ENCODE measurements at regions of chr6 and their contacts with region 1.

Region 1: GRCh38 chr6:112780498-112781096 is 433.5 kb downstream of the RFPL4B start:
- DNase-seq: peak; percentile 61 to 76
- H3K4me3 ChIP-seq: no peak overlapping the region
- H3K27ac ChIP-seq: no peak overlapping the region
- H3K4me1 ChIP-seq: no peaks in the 10 kb centered on the region
- H3K27me3 ChIP-seq: no peaks in the 10 kb centered on the region
- CTCF ChIP-seq: peak; percentile 85 to 87

Region 2: GRCh38 chr6:112179631-112180030 is 601.0 kb before region 1 on chr6:
- intact Hi-C with region 1: no loop called
- DNase-seq: no peak
- H3K4me3 ChIP-seq: no peak overlapping the region
- H3K27ac ChIP-seq: no peak overlapping the region
- H3K4me1 ChIP-seq: peaks cover 0 to 6% (median 0%) of the 10 kb centered on the region in 4 donors
- H3K27me3 ChIP-seq: no peaks in the 10 kb centered on the region
- CTCF ChIP-seq: no peak

Region 3: GRCh38 chr6:112841553-112842329 is 61.1 kb after region 1 on chr6:
- intact Hi-C with region 1: no loop called
- DNase-seq: no peak
- H3K4me3 ChIP-seq: no peak overlapping the region
- H3K27ac ChIP-seq: no peak overlapping the region
- H3K4me1 ChIP-seq: peaks cover 0 to 4% (median 0%) of the 10 kb centered on the region in 4 donors
- H3K27me3 ChIP-seq: no peaks in the 10 kb centered on the region
- CTCF ChIP-seq: no peak

Region 4: DNA sequence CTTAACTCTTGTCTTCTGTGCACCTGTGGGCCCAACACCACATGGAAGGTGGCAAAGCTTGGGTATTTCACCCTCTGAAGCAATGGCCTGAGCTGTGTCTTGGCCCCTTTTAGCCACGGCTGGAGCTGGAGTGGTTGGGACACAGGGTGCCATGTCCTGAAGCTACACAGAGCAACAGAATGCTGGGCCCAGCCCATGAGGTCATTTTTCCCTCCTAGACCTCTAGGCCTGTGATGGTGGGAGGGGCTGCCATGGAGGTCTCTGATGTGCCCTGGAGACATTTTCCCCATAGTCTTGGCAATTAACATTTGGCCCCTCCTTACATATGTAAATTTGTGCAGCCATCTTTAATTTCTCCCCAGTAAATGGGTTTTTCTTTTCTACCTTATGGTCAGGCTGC is 187.4 kb after region 1 on chr6:
- intact Hi-C with region 1: no loop called
- DNase-seq: no peak
- H3K4me3 ChIP-seq: no peak overlapping the region
- H3K27ac ChIP-seq: no peak overlapping the region
- H3K4me1 ChIP-seq: no peaks in the 10 kb centered on the region
- H3K27me3 ChIP-seq: no peaks in the 10 kb centered on the region
- CTCF ChIP-seq: no peak

Region 5: DNA sequence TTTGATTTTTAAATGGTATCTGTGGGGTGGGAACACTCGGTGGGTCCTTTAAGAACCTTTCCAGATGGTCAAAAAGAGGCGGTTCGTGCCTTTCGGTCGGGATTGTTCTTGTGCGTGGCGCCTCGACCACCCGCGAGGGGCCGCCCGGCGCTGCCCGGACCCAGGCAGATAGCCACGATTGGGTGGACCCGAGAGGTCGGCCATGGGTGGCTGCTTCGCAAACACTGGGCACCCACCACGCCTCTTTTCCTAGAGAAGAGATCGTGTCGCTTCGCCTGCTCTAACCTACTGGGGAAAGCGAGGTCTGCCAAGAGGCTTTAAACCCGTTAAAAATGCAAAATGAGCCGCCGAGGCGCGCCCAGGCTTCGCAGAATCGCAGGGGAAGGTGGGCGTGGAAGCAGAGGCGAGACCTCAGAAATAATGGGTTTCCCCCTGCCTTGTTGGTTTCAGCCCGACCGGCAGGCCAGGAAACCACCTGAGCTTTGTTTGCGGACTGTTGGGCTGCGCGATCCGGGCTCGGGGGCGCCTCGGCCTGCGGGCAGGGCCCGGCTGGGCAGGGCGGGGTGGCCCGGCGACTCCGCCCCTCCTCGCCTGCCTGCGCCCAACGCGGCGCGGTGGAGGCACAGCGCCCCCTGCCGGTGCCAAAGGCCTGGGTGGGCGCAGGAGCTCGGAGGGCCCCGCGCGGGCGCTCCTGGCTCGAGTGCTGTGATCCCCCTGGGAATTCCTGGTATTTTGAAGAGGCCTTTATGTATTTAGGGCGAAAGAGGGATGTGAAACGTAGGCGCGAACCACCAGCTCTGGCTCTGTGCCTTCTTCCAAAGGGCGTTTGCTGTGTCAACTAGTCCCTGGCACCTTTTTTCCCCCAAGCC is 1078.1 kb after region 1 on chr6:
- intact Hi-C with region 1: loop called (anchors 10 kb)
- DNase-seq: peak; percentile 73 to 93
- H3K4me3 ChIP-seq: peak overlapping the region; percentile 61 to 77
- H3K27ac ChIP-seq: peak overlapping the region; percentile 93 to 99
- H3K4me1 ChIP-seq: peaks cover 0 to 26% (median 5%) of the 10 kb centered on the region in 4 donors
- H3K27me3 ChIP-seq: no peaks in the 10 kb centered on the region
- CTCF ChIP-seq: peak; percentile 90 to 98

Region 6: GRCh38 chr6:113909234-113909856 is 1128.7 kb after region 1 on chr6:
- intact Hi-C with region 1: loop called (anchors 10 kb)
- DNase-seq: no peak
- H3K4me3 ChIP-seq: no peak overlapping the region
- H3K27ac ChIP-seq: no peak overlapping the region
- H3K4me1 ChIP-seq: peaks cover 0 to 4% (median under 1%) of the 10 kb centered on the region in 4 donors
- H3K27me3 ChIP-seq: no peaks in the 10 kb centered on the region
- CTCF ChIP-seq: peak; percentile 61 to 75